GM12878 (cell line): ENCODE measurements at regions of chr2 and their contacts with region 1.

Region 1: GRCh38 chr2:60840880-60841279 is 40.5 kb upstream of the REL start:
- DNase-seq: peak; percentile 86
- ATAC-seq: peak; percentile 63
- H3K4me3 ChIP-seq: peak overlapping the region; percentile 38; the same call in 1 of the 2 replicates
- H3K27ac ChIP-seq: peak overlapping the region; percentile 92
- H3K4me1 ChIP-seq: peaks cover 91% of the 10 kb centered on the region
- H3K27me3 ChIP-seq: no peaks in the 10 kb centered on the region
- CTCF ChIP-seq: no peak
- EP300 ChIP-seq: peak; percentile 30 to 54; a peak in 1 of 4 replicates
- POLR2A ChIP-seq: no peak
- RAD21 ChIP-seq: 0 out of 2 replicates have a peak, but pooled peaks have one; percentile 17

Region 2: DNA sequence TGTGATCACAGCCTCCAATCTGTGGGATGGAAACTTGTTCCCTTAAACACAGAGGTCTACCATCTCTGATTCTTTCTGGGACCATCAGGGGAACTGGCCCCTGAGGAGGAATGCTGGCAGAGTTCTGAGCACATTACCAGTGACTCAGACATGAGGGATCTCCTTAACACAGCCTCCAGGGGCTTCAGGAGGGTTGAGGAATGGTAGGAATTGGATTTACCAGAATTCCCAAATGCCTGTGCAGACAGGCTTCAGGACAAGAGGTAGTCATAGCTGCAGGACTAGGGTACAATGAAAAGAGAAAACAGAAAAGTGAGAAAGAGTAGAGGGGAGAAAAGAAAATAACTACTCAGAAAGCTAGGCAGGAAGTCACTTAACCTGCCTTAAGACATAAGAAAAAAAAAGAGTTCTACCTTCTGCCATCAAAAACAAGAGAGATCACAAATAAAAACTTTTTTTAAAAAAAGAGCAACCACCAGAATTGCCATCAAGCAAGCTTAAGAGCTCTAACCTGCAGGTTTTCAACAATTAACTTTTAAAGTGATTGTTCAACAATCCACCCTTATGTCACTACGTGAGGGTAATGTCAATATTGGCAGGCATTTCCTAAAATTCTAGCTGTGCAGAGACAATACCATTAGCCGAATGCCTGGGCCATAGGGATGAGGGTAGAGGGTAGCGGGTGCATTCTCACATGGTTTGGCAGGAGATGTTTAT is 811.9 kb before region 1 on chr2:
- CTCF ChIA-PET with region 1: no interaction called
- POLR2A ChIA-PET with region 1: no interaction called
- RAD21 ChIA-PET with region 1: no interaction called
- SMC1A ChIA-PET with region 1: no interaction called
- in situ Hi-C with region 1: no loop called
- intact Hi-C with region 1: no loop called
- DNase-seq: no peak
- ATAC-seq: no peak
- H3K4me3 ChIP-seq: no peak overlapping the region
- H3K27ac ChIP-seq: no peak overlapping the region
- H3K4me1 ChIP-seq: no peaks in the 10 kb centered on the region
- H3K27me3 ChIP-seq: no peaks in the 10 kb centered on the region
- CTCF ChIP-seq: no peak
- EP300 ChIP-seq: no peak
- POLR2A ChIP-seq: no peak
- RAD21 ChIP-seq: no peak

Region 3: DNA sequence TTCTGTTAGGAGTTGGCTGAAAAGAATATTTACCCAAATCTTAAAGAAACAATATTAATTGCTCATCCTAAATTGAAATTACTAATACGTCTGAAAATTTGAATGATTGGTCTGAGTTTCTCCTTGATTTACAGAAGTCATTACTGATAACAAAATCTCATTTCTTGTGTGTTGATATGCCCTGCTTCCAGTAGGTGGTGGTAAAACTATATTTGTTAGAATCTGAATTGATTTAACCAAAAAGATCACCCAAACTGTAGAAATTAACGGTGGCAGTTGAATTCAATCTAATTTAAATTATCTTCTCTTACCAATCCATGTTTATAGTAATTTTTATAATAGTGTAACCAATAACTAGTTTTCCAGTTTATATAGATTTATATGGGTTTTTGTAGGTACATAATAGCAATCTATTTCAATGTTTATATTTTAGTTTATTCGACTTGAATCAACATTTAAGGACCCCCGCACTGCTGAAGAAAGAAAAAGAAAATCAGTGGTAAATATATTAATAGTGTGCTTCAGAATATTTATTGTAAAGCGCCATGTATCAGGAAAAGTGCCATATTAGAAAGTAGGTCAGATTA is 46.5 kb before region 1 on chr2:
- CTCF ChIA-PET with region 1: interaction called, 5 read pairs
- POLR2A ChIA-PET with region 1: no interaction called
- RAD21 ChIA-PET with region 1: no interaction called
- SMC1A ChIA-PET with region 1: interaction called, 8 read pairs
- in situ Hi-C with region 1: no loop called
- intact Hi-C with region 1: loop called (anchors 2 kb)
- DNase-seq: no peak
- ATAC-seq: peak; percentile 51; the same call in 2 of the 3 replicates
- H3K4me3 ChIP-seq: no peak overlapping the region
- H3K27ac ChIP-seq: no peak overlapping the region
- H3K4me1 ChIP-seq: peaks cover 16% of the 10 kb centered on the region
- H3K27me3 ChIP-seq: no peaks in the 10 kb centered on the region
- CTCF ChIP-seq: peak; percentile 33 to 73 (median 55); a peak in 4 of 6 replicates
- EP300 ChIP-seq: no peak
- POLR2A ChIP-seq: no peak
- RAD21 ChIP-seq: peak; percentile 81

Region 4: DNA sequence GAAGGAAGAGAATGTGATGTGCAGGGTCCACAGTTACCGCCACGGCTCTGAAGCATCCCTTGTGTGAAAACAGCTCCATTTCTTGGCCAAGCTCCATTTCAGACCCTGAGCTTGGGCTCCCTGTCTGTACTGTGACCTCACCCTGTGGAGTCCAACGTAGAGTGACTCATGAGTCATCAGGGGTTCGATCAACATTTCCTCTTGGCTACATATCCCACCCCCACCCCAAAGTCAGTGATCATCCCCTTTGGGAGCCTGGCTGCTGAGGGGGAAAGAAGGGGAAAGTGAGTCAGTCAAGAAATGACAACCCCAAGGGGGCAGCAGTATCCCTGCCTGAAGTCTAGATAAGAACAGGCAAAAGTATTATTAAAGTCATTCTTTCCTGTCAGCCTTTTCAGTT is 22.6 kb before region 1 on chr2:
- CTCF ChIA-PET with region 1: interaction called, 4 read pairs
- POLR2A ChIA-PET with region 1: interaction called, 7 read pairs
- RAD21 ChIA-PET with region 1: interaction called, 16 read pairs
- SMC1A ChIA-PET with region 1: interaction called, 11 read pairs
- in situ Hi-C with region 1: no loop called
- intact Hi-C with region 1: no loop called
- DNase-seq: no peak
- ATAC-seq: peak; percentile 52
- H3K4me3 ChIP-seq: no peak overlapping the region
- H3K27ac ChIP-seq: no peak overlapping the region
- H3K4me1 ChIP-seq: no peaks in the 10 kb centered on the region; the same call in 1 of the 2 replicates
- H3K27me3 ChIP-seq: no peaks in the 10 kb centered on the region
- CTCF ChIP-seq: peak in 2 of 3 experiments; percentile 35 to 37; a peak in 4 of 6 replicates
- EP300 ChIP-seq: no peak
- POLR2A ChIP-seq: no peak
- RAD21 ChIP-seq: peak; percentile 55

Region 5: DNA sequence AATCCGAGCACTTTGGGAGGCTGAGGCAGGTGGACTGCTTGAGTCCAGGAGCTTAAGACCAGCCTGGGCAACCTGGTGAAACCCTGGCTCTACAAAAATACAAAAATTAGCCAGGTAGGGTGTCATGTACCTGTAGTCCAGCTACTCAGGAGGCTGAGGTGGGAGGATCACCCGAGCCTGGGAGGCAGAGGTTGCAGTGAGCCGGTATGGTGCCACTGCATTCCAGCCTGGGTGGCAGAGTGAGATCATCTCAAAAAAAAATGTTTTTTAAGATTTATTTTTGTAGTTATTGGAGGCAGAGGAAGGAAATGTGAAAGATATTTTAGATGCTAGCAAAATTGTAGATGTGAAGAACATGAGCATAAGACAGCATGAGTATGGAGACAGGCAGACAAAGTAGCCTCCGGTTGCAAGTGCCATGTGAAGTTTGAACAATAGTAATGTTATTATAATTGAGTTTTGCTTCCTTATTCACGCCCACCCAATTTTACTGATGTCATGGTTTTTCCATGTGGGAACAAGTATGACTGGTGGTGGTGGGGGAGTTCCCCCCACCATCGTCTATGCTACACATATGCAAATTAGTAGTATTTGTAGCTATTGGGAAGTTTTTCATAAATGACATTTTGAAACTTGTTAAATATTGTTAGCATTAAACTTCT is 58.5 kb after region 1 on chr2:
- CTCF ChIA-PET with region 1: interaction called, 3 read pairs
- POLR2A ChIA-PET with region 1: no interaction called
- RAD21 ChIA-PET with region 1: interaction called, 9 read pairs
- SMC1A ChIA-PET with region 1: interaction called, 12 read pairs
- in situ Hi-C with region 1: no loop called
- intact Hi-C with region 1: no loop called
- DNase-seq: peak; percentile 37
- ATAC-seq: peak; percentile 68
- H3K4me3 ChIP-seq: no peak overlapping the region
- H3K27ac ChIP-seq: peak overlapping the region; percentile 47
- H3K4me1 ChIP-seq: peaks cover 13% of the 10 kb centered on the region
- H3K27me3 ChIP-seq: no peaks in the 10 kb centered on the region
- CTCF ChIP-seq: no peak
- EP300 ChIP-seq: peak; percentile 77 to 82
- POLR2A ChIP-seq: peak; percentile 32; the same call in 1 of the 2 replicates
- RAD21 ChIP-seq: no peak

Region 6: DNA sequence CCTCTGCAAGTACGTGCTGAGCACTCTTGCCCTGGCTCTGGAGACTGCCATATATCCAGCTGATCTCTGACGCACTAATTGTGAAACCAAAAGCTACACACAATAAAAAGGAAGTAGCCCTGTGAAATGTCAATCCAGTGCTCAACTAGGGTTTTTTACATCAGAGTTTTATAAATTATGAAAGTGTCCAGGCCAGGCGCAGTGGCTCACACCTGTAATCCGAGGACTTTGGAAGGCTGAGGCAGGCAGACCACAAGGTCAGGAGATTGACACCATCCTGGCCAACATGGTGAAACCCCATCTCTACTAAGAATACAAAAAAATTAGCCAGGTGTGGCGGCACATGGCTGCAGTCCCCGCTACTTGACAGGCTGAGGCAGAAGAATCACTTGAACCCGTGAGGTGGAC is 152.1 kb after region 1 on chr2:
- CTCF ChIA-PET with region 1: interaction called, 16 read pairs
- POLR2A ChIA-PET with region 1: interaction called, 3 read pairs
- RAD21 ChIA-PET with region 1: interaction called, 14 read pairs
- SMC1A ChIA-PET with region 1: interaction called, 6 read pairs
- in situ Hi-C with region 1: no loop called
- intact Hi-C with region 1: no loop called
- DNase-seq: peak; percentile 83
- ATAC-seq: peak; percentile 99
- H3K4me3 ChIP-seq: no peak overlapping the region
- H3K27ac ChIP-seq: peak overlapping the region; percentile 41
- H3K4me1 ChIP-seq: peaks cover 7% of the 10 kb centered on the region
- H3K27me3 ChIP-seq: no peaks in the 10 kb centered on the region
- CTCF ChIP-seq: no peak
- EP300 ChIP-seq: peak; percentile 82 to 93
- POLR2A ChIP-seq: no peak
- RAD21 ChIP-seq: no peak